IMR-90 (cell line): ENCODE measurements at regions of chr19 and their contacts with region 1.

Region 1: DNA sequence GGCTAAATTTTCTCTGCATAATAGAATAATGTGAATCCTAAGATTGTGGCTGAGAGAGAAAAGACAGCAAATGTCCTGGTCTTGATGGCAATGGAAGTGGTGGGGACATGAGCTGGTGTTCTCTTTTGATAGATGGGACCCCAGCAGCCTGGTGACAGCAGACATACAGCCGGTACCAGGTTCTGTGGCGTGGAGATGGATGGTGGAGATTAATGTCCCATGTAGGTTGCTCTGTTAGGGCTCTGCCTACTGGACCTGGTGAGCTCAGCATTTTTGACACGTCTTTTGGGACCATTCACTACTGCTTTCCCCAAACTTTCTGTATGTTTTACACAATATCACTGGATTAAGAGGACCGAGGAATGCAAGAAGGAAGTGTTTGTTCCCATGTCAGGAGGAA is 8.2 kb upstream of the SIGLEC14 start:
- DNase-seq: no peak
- ATAC-seq: no peak
- H3K4me3 ChIP-seq: no peak overlapping the region
- H3K27ac ChIP-seq: no peak overlapping the region
- H3K4me1 ChIP-seq: no peaks in the 10 kb centered on the region
- H3K27me3 ChIP-seq: no peaks in the 10 kb centered on the region
- CTCF ChIP-seq: no peak
- POLR2A ChIP-seq: no peak
- RAD21 ChIP-seq: no peak

Region 2: DNA sequence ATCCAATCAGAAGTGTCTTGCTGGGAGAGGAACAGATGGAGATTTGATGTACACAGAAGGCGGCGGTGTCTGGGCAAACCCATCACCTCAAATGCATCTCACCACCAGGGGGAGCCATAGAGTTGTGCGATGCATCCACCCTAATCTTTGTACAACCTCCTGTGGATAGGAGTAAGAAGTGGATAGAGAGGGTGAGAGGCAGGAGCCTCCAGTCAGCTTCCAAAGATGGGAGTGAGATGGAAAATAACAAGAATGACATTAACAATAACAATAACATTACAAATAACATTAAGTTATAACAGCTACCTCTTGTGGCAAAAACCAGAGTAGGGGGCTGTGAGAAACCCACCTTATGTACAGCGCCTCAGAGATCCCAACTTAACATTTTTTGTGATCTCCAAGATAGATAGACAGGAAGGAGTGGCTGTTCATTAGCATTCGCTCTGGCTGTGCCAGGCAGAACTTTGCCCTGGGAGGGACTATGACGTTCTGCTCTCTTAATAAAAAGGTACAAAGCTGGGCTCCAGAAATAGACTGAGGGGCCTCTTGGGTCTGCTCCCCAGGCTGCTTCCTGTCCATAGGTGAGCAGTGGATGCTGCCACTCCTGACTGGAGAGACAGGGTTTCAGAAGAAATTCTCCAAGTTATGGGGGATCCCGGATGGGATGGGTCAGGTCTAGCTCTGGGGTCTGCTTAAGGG is 181.6 kb before region 1 on chr19:
- CTCF ChIA-PET with region 1: interaction called, 27 read pairs
- POLR2A ChIA-PET with region 1: no interaction called
- dilution Hi-C with region 1: no loop called
- in situ Hi-C with region 1: loop called (anchors 5 kb)
- intact Hi-C with region 1: loop called (anchors 1 kb)
- DNase-seq: peak; percentile 59
- ATAC-seq: peak; percentile 88
- H3K4me3 ChIP-seq: no peak overlapping the region
- H3K27ac ChIP-seq: no peak overlapping the region
- H3K4me1 ChIP-seq: no peaks in the 10 kb centered on the region
- H3K27me3 ChIP-seq: no peaks in the 10 kb centered on the region
- CTCF ChIP-seq: peak; percentile 69
- POLR2A ChIP-seq: no peak
- RAD21 ChIP-seq: peak; percentile 75